Mammary epithelial cell (primary cell): ENCODE measurements at regions of chr4 and their contacts with region 1.

Region 1: GRCh38 chr4:55312489-55313101 is 33.4 kb upstream of the SRD5A3 start:
- DNase-seq: peak; percentile 25
- H3K4me3 ChIP-seq: no peak overlapping the region
- H3K27ac ChIP-seq: no peak overlapping the region
- H3K4me1 ChIP-seq: no peaks in the 10 kb centered on the region
- H3K27me3 ChIP-seq: no peaks in the 10 kb centered on the region
- CTCF ChIP-seq: peak; percentile 71 to 88

Region 2: DNA sequence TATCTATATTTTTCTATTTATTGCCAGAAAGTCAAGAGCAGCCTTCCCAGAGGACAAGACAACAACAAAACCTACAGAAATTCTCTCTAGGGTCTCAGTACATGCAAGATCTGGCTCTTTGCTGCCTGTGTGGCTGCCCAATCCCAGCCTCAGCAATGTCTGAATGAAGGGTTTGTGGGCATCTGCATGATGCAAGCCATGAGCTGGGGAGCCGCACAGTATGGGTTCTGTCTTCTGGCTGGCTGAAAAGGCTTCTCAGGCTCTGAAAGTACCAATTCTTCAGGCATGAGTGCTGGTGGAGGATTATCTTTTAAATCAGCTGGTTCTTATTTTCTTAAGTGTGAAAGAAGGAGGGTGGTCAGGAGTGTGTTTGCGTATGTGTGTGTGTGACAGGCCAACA is 978.9 kb before region 1 on chr4:
- CTCF ChIA-PET with region 1: no interaction called
- dilution Hi-C with region 1: no loop called
- in situ Hi-C with region 1: no loop called
- intact Hi-C with region 1: no loop called
- DNase-seq: no peak
- H3K4me3 ChIP-seq: no peak overlapping the region
- H3K27ac ChIP-seq: no peak overlapping the region
- H3K4me1 ChIP-seq: no peaks in the 10 kb centered on the region
- H3K27me3 ChIP-seq: peaks cover 2% of the 10 kb centered on the region
- CTCF ChIP-seq: no peak

Region 3: GRCh38 chr4:54645830-54646229 is 666.8 kb before region 1 on chr4:
- CTCF ChIA-PET with region 1: no interaction called
- dilution Hi-C with region 1: no loop called
- in situ Hi-C with region 1: no loop called
- intact Hi-C with region 1: no loop called
- DNase-seq: no peak
- H3K4me3 ChIP-seq: no peak overlapping the region
- H3K27ac ChIP-seq: no peak overlapping the region
- H3K4me1 ChIP-seq: no peaks in the 10 kb centered on the region
- H3K27me3 ChIP-seq: no peaks in the 10 kb centered on the region
- CTCF ChIP-seq: no peak

Region 4: GRCh38 chr4:55561889-55562288 is 249.3 kb after region 1 on chr4:
- CTCF ChIA-PET with region 1: no interaction called
- dilution Hi-C with region 1: no loop called
- in situ Hi-C with region 1: no loop called
- intact Hi-C with region 1: no loop called
- DNase-seq: no peak
- H3K4me3 ChIP-seq: no peak overlapping the region
- H3K27ac ChIP-seq: no peak overlapping the region
- H3K4me1 ChIP-seq: no peaks in the 10 kb centered on the region
- H3K27me3 ChIP-seq: no peaks in the 10 kb centered on the region
- CTCF ChIP-seq: no peak

Region 5: DNA sequence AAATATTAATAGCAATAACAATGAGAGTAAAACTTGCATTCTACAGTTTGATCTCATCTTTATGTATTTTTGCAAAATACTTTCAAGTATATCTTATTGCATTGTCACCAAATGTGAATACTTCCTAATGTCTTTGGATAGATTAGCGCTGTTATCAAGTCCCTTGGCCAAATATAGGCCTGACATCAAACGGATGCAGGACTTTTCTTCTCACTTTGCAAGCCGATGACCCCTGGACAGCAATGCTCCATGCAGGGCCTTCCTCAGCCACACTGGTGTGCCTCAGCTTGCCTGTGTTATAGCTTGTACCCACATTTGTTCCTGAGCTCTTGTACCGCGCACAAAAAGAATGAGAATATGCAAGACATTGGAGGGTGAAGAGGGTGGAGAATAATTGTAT is 341.5 kb after region 1 on chr4:
- CTCF ChIA-PET with region 1: interaction called, 21 read pairs
- dilution Hi-C with region 1: no loop called
- in situ Hi-C with region 1: no loop called
- intact Hi-C with region 1: no loop called
- DNase-seq: no peak
- H3K4me3 ChIP-seq: no peak overlapping the region
- H3K27ac ChIP-seq: no peak overlapping the region
- H3K4me1 ChIP-seq: no peaks in the 10 kb centered on the region
- H3K27me3 ChIP-seq: no peaks in the 10 kb centered on the region
- CTCF ChIP-seq: no peak